ENCODE measurements at regions of chr18 and their contacts with region 1.

Region 1: DNA sequence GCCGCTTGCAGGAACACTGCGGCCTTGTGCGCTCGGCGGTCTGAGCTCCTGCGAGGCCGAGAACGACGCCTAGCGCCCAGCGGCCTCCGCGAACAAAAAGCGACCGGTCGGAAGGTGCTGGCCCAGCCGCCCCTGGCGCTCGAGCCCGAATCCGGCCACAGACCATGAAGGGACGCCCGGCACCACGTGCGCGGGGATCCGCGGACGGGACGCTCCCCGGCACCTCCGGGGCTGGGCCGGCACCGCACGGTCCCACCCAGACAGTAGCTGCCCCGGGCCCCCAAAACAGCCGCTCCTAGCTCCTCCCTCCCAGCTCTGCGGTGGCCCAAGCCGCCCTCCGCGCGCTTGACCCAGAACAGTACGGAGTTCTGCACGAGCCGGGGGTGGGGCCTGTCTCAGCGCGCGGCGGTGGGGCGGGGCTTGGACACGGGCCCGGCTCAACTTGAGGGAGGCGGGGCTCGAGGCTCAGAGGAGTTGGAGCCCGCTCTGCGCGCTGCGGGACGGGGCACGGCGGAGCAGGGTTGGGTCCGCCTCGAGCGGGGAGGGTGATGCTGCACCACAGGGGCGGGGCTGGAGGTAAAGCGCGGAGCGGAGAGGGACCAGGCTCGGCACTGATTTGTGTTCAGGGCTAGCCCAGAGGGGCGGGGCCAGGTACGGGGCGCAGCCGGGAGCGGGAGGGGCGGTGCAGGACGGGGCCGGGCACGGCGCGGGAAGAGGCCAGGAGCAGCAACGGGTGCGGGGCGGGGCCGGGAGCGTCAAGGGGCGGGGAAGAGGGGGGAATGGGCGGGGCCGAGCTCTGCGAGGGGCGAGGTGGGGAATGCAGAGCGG is 538 bp upstream of the IMPA2 start:
- DNase-seq: peak; percentile 96
- ATAC-seq: peak; percentile 92
- H3K4me3 ChIP-seq: peak overlapping the region; percentile 46
- H3K27ac ChIP-seq: peak overlapping the region; percentile 76
- H3K4me1 ChIP-seq: peaks cover 7% of the 10 kb centered on the region
- H3K27me3 ChIP-seq: no peaks in the 10 kb centered on the region
- CTCF ChIP-seq: 0 out of 2 replicates have a peak, but pooled peaks have one; percentile 15
- POLR2A ChIP-seq: peak; percentile 69
- RAD21 ChIP-seq: no peak

Region 2: DNA sequence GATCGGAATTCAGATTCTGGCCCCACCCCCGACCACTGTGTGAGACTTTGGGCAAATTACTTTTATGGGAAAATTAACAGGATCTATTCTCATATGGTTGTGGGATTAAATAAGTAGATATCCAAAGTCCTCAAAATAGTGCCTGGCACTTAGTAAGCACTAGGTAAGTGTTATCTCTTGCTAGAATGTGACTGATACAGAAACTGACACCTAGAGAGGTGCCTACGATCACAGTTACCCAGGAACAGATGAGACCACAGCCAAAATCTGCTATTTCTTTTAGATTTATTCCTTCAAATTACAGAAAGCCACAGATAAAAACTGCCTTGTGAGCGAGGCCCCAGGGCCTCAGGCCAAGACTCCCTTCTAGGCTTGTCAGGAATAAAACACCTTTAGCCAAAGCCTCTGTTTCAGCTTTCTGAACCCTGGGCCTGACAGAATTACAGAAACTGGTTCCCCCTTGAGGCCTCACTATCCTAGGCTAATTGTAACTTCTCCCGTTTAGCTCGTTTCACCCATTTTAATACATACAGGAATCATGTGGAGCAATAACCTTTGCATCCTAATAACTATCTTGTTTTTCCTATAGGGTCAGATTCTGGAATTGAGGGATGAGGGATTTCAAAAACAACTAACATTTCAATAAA is 151.9 kb before region 1 on chr18:
- CTCF ChIA-PET with region 1: no interaction called
- POLR2A ChIA-PET with region 1: no interaction called
- dilution Hi-C with region 1: no loop called
- in situ Hi-C with region 1: no loop called
- intact Hi-C with region 1: no loop called
- DNase-seq: no peak
- ATAC-seq: no peak
- H3K4me3 ChIP-seq: no peak overlapping the region
- H3K27ac ChIP-seq: no peak overlapping the region
- H3K4me1 ChIP-seq: no peaks in the 10 kb centered on the region
- H3K27me3 ChIP-seq: no peaks in the 10 kb centered on the region
- CTCF ChIP-seq: no peak
- POLR2A ChIP-seq: no peak
- RAD21 ChIP-seq: no peak

Region 3: DNA sequence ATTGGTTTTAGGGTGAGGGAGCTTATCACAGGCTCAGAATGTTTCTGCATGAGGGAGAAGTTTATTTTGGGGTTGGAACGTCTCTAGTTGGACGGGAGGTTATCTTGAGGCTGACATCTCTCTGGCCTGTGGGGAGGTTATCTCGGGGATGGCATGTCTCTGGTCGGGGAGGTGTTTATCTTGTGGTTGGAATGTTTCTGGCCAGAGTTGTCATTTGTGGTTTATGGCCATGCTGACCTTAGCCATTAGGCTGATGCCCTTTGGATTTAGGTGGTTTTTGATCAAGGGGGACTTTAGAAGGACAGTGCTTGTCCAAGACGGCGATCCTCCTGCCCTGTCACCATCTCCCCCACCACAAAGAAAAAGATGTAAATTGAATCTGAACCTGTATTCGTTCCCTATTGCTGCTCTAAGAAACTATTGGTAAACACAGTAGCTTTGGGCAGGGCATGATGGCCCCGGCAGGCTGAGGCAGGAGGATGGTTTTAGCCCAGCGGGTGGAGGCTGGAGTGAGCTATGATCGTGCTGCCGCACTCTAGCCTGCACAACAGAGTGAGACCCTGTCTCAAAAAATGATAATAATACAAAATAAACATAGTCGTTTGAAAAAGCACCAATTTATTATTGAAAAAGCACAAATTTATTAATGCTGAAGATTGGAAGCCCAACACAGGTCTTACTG is 54.8 kb before region 1 on chr18:
- CTCF ChIA-PET with region 1: no interaction called
- POLR2A ChIA-PET with region 1: no interaction called
- dilution Hi-C with region 1: no loop called
- in situ Hi-C with region 1: no loop called
- intact Hi-C with region 1: no loop called
- DNase-seq: no peak
- ATAC-seq: peak; percentile 59
- H3K4me3 ChIP-seq: no peak overlapping the region
- H3K27ac ChIP-seq: no peak overlapping the region
- H3K4me1 ChIP-seq: no peaks in the 10 kb centered on the region
- H3K27me3 ChIP-seq: peaks cover 16% of the 10 kb centered on the region
- CTCF ChIP-seq: no peak
- POLR2A ChIP-seq: no peak
- RAD21 ChIP-seq: no peak

Region 4: DNA sequence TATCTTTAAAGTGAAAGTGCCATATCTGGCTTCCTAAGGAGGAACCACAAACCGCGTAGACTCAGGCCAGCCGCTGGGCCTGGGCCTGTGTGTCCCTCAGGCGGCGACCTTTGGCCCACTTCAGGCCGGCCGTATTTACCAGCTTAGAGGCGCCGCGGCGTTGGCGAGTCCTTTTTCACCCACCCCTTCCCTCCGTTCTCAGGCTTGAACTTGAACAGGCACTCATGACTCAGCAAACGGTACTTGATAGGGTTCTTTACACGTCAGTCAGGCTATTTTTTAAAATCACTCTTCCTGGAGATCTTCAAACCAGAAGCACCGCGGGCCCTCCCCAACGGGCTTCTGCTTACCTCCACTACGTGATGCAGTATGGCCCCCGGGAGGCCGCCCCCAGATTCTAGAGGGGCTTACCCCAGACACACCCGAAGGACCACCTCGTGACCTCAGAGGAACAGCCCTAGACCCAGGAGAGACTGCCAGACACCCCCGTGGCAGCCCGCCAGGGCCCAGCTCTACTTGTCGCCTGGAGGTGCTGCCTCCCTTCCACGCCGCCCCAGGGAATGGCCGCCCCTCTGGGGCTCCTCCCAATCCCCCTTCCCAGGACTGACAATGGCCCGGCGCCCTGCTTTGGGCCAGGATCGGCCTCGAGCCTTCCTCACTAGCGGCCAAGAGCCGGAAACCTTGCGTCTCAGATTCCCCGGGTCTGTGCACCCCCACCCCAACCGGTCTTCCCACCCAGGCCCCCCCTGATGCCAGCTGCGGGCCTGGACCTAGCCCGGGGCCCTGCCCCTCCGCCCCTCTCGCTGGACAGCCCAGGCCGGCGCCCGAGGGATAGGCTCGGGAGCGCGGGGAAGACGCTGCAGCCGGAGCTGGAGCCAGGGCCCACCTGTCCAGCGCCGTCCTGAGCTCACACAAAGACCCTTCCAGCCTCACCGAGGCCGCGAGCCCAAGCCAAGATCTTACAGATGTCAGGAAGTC is 33.3 kb before region 1 on chr18:
- CTCF ChIA-PET with region 1: interaction called, 3 read pairs
- POLR2A ChIA-PET with region 1: no interaction called
- dilution Hi-C with region 1: no loop called
- in situ Hi-C with region 1: no loop called
- intact Hi-C with region 1: loop called (anchors 1 kb)
- DNase-seq: peak; percentile 97
- ATAC-seq: peak; percentile 88
- H3K4me3 ChIP-seq: no peak overlapping the region
- H3K27ac ChIP-seq: peak overlapping the region; percentile 88
- H3K4me1 ChIP-seq: peaks cover 24% of the 10 kb centered on the region
- H3K27me3 ChIP-seq: no peaks in the 10 kb centered on the region
- CTCF ChIP-seq: no peak
- POLR2A ChIP-seq: no peak
- RAD21 ChIP-seq: no peak

Measured in IMR-90 (cell line).